ENCODE measurements at regions of chr16 and their contacts with region 1.

Region 1: GRCh38 chr16:88619859-88620815 is 18.2 kb upstream of the IL17C start:
- DNase-seq: peak in 9 of 10 donors; percentile 41 to 88 (median 82)
- ATAC-seq: peak; percentile 84 to 91
- H3K4me3 Mint-ChIP-seq: peak overlapping the region; percentile 22 to 84 (median 56)
- H3K27ac Mint-ChIP-seq: peak overlapping the region; percentile 91 to 100 (median 98)
- H3K4me1 Mint-ChIP-seq: peaks cover 12 to 35% (median 32%) of the 10 kb centered on the region in 4 donors
- H3K27me3 Mint-ChIP-seq: peaks cover 0 to 1% (median 0%) of the 10 kb centered on the region in 5 donors

Region 2: GRCh38 chr16:88633684-88634140 is 13.6 kb after region 1 on chr16:
- POLR2A ChIA-PET with region 1: interaction called, 11 read pairs
- DNase-seq: peak in 7 of 10 donors; percentile 31 to 76 (median 46)
- ATAC-seq: peak; percentile 47 to 60
- H3K4me3 Mint-ChIP-seq: peak overlapping the region; percentile 39 to 85 (median 76)
- H3K27ac Mint-ChIP-seq: peak overlapping the region in 6 of 10 donors; percentile 25 to 90 (median 56)
- H3K4me1 Mint-ChIP-seq: peaks cover 11 to 41% (median 35%) of the 10 kb centered on the region in 4 donors
- H3K27me3 Mint-ChIP-seq: peaks cover 0 to 10% (median 2%) of the 10 kb centered on the region in 5 donors

Region 3: DNA sequence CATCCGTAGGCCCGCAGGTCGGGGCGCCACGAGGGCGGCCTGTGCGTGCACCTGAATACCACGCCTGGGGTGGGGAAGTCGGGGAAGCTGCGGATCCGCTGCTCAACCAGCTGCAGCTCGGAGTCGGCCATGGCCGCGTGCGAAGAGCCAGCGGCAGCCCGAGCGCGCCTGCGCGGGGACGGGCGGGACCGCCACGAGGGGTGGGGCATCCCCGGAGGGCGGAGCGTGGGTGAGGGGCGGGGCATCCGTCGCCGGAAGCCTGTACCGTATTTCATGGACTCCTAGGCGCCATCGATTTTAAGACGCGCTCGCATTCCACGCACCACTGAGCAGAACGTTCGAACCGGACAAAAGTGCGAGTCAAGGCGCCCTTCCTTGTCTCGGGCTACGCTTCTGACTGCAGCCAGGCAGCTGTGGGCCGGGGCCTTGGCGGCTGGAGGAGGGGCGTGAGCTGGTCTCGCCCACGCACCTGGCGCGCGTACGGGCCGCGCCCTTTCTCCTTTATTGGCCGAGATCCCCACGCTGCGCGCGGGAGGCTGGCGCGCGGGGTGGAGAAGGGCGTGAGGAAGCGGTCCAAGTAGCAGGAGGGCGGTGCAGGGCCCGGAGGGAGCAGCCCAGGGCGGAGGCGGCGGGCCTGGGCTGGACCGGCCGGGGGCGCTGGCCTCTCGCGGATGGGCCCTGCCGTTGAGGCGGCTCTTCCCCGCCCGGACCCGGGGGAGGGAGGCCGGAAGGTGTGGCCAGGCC is 191.8 kb after region 1 on chr16 and contains the start of gene APRT:
- POLR2A ChIA-PET with region 1: no interaction called
- DNase-seq: peak; percentile 93 to 99 (median 98)
- ATAC-seq: peak; percentile 83 to 88
- H3K4me3 Mint-ChIP-seq: peak within 1 kb of the TSS; percentile 94 to 98 (median 96)
- H3K27ac Mint-ChIP-seq: peak within 1 kb of the TSS; percentile 81 to 99 (median 97)
- H3K4me1 Mint-ChIP-seq: peaks cover 3 to 26% (median 22%) of the 10 kb centered on the region in 4 donors
- H3K27me3 Mint-ChIP-seq: no peaks in the 10 kb centered on the region
- polyA plus RNA-seq, gene APRT: 428 to 492 (median 431) TPM

Region 4: DNA sequence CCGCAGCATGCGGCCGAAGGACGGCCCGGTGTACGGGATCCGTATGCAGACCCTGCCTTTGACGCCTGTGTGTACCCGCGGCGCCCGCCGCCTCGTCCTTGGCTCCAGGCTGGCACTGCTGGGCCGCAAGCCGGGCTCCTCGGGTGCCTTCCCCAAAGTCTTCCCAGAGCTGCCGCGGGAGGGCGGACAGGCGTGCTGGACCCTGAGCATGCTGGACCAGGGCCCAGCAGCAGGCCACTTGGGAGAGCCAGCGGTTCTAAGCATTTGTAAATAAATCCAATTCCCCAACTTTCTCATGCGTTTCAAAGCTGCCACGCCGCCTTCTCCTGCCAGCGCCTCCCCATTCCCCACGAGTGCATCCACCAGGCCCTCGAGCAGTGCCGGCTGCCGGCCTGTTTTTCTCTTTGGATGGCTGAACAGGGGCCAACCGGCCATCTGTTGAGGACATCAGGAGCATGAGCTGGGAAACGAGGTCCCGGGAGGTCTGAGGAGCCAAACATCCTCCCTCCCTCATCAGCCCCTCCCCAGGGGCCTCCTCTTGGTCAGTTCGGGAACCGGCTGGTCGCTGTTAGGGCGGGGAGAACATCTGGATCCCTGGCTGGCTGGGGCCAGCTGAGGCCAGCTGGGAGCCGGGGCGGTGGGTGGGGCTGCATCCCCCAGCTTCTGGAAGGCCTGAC is 266.8 kb after region 1 on chr16:
- POLR2A ChIA-PET with region 1: no interaction called
- DNase-seq: no peak
- ATAC-seq: no peak
- H3K4me3 Mint-ChIP-seq: no peak overlapping the region
- H3K27ac Mint-ChIP-seq: no peak overlapping the region
- H3K4me1 Mint-ChIP-seq: peaks cover 0 to 6% (median 4%) of the 10 kb centered on the region in 4 donors
- H3K27me3 Mint-ChIP-seq: no peaks in the 10 kb centered on the region